ENCODE measurements at regions of chr1 and their contacts with region 1.

Region 1: GRCh38 chr1:202926720-202927491 is at the start of gene KLHL12:
- DNase-seq: peak; percentile 98
- H3K4me3 ChIP-seq: peak within 1 kb of the TSS; percentile 90
- H3K27ac ChIP-seq: peak within 1 kb of the TSS; percentile 78
- H3K4me1 ChIP-seq: peaks cover 38% of the 10 kb centered on the region
- CTCF ChIP-seq: peak; percentile 76
- total RNA-seq, gene KLHL12: 33.9 and 35.7 TPM in 2 replicates

Region 2: GRCh38 chr1:202888531-202889360 is 38.2 kb before region 1 on chr1 and contains the start of gene RABIF:
- CTCF ChIA-PET with region 1: no interaction called
- POLR2A ChIA-PET with region 1: no interaction called
- intact Hi-C with region 1: loop called (anchors 2 kb)
- DNase-seq: peak; percentile 96
- H3K4me3 ChIP-seq: peak within 1 kb of the TSS; percentile 78
- H3K27ac ChIP-seq: peak within 1 kb of the TSS; percentile 88
- H3K4me1 ChIP-seq: peaks cover 14% of the 10 kb centered on the region
- CTCF ChIP-seq: no peak
- total RNA-seq, gene RABIF: 5.2 and 7.8 TPM in 2 replicates

Region 3: DNA sequence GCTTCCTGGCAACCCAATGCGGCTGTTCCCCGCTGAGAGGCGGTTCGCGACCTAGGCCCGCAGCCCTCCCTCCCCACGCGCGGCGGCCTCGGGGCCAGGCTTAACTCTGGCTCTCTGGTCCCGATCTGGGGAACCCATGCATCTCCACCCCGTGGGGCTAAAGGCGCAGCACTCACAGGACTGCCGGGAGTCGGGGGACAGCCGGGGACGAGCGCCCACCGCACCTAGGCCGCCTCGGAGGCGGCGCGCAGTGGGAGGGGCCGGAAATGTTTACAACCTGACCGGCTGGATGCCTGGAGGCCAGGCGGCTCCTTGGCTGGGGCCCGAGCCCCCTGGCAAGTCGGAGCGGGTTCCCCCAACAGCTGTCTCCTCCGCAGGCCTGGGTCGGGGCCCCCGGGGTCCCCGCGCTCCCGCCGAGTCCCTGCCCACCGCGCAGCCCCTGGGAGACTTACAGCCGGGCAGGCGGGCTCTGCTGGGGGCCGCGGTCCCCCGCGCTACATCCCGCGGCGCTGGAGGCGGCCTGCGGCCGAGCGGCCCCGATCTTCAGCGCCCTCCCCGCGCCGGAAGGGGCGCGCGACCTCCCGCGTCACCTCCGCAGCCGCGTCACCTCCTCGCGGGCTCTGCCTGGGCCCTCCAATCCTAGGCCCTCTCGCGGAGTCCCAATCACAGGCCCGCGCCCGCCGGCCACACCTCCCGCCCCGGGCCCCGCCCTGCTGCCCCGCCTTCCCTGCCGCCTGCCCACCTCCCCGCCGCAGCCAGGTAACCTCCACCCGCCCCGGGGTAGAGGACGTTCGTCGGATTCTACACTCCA is 31.0 kb after region 1 on chr1 and contains the start of gene ADIPOR1:
- CTCF ChIA-PET with region 1: no interaction called
- POLR2A ChIA-PET with region 1: interaction called, 4 read pairs
- intact Hi-C with region 1: loop called (anchors 2 kb)
- DNase-seq: peak; percentile 92
- H3K4me3 ChIP-seq: peak within 1 kb of the TSS; percentile 95
- H3K27ac ChIP-seq: peak within 1 kb of the TSS; percentile 31
- H3K4me1 ChIP-seq: peaks cover 14% of the 10 kb centered on the region
- CTCF ChIP-seq: no peak
- total RNA-seq, gene ADIPOR1: 49.4 and 55.2 TPM in 2 replicates

Region 4: GRCh38 chr1:202968840-202969295 is 42.0 kb after region 1 on chr1:
- CTCF ChIA-PET with region 1: no interaction called
- POLR2A ChIA-PET with region 1: interaction called, 4 read pairs
- intact Hi-C with region 1: loop called (anchors 1 kb)
- DNase-seq: peak; percentile 77
- H3K4me3 ChIP-seq: no peak overlapping the region
- H3K27ac ChIP-seq: peak overlapping the region; percentile 25
- H3K4me1 ChIP-seq: peaks cover 29% of the 10 kb centered on the region
- CTCF ChIP-seq: peak; percentile 77

Region 5: GRCh38 chr1:202998836-202999750 is 72.2 kb after region 1 on chr1:
- CTCF ChIA-PET with region 1: no interaction called
- POLR2A ChIA-PET with region 1: no interaction called
- intact Hi-C with region 1: loop called (anchors 2 kb)
- DNase-seq: peak; percentile 83
- H3K4me3 ChIP-seq: peak overlapping the region; percentile 22
- H3K27ac ChIP-seq: peak overlapping the region; percentile 65
- H3K4me1 ChIP-seq: peaks cover 16% of the 10 kb centered on the region
- CTCF ChIP-seq: peak; percentile 96

Measured in OCI-LY7 (cell line).